Heart right ventricle (tissue), 16 donors: ENCODE measurements at regions of chr19 and their contacts with region 1.

Region 1: GRCh38 chr19:14405758-14406644 is 13.1 kb downstream of the DDX39A start:
- DNase-seq: peak; percentile 82 to 89
- ATAC-seq: peak; percentile 86 to 93 (median 90)
- H3K4me3 ChIP-seq: peak overlapping the region in 7 of 10 donors; percentile 13 to 40 (median 37)
- H3K27ac ChIP-seq: peak overlapping the region in 9 of 10 donors; percentile 13 to 82 (median 62)
- H3K4me1 ChIP-seq: peaks cover 0 to 19% (median 10%) of the 10 kb centered on the region in 9 donors
- H3K27me3 ChIP-seq: no peaks in the 10 kb centered on the region
- CTCF ChIP-seq: peak; percentile 88 to 97 (median 94)

Region 2: DNA sequence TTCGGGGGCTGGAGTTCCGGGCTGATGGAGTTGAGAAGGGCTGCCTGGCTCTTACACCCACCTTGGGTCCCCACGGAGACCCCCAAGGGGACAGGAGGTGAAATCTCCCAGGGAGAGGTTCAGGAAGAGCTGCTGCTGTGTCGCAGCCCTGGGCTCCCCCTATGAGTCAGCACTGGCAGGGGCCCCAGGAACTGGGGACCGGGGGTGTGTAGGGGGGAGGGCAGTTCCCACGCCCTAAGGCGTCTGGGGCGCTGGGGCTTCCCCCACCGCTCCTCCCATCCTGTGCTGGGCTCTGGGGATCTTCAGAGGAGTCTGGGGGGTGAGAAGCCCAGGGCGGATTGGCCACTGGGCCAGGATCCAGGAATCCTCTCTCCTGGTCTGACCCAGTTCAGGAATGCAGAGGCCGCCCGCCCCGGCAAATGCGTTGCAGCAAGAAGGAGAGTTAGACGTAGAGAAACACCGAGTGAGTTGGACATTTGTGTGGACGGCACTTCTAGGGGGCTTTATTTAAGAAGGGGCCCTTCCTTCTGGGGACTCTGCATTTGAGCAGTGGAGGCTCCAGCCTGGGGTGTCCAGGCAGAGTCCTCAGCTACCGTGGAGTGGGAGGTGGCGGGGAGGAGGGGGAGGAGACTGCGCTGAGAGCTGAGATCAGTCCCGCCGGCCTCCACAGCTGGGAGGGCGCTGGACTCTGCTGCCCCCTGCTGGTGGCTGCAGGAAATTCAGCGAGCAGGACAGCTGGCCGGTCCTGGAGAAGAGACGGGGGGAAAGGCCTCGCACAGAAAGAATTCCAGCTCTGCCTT is 544.1 kb before region 1 on chr19:
- intact Hi-C with region 1: no loop called
- DNase-seq: peak; percentile 95
- ATAC-seq: peak; percentile 91 to 96 (median 94)
- H3K4me3 ChIP-seq: peak overlapping the region in 9 of 10 donors; percentile 25 to 59 (median 51)
- H3K27ac ChIP-seq: peak overlapping the region; percentile 78 to 97 (median 96)
- H3K4me1 ChIP-seq: peaks cover 9 to 38% (median 27%) of the 10 kb centered on the region in 9 donors
- H3K27me3 ChIP-seq: peaks cover 0 to 29% (median 0%) of the 10 kb centered on the region in 7 donors
- CTCF ChIP-seq: peak; percentile 95 to 99 (median 98)

Region 3: DNA sequence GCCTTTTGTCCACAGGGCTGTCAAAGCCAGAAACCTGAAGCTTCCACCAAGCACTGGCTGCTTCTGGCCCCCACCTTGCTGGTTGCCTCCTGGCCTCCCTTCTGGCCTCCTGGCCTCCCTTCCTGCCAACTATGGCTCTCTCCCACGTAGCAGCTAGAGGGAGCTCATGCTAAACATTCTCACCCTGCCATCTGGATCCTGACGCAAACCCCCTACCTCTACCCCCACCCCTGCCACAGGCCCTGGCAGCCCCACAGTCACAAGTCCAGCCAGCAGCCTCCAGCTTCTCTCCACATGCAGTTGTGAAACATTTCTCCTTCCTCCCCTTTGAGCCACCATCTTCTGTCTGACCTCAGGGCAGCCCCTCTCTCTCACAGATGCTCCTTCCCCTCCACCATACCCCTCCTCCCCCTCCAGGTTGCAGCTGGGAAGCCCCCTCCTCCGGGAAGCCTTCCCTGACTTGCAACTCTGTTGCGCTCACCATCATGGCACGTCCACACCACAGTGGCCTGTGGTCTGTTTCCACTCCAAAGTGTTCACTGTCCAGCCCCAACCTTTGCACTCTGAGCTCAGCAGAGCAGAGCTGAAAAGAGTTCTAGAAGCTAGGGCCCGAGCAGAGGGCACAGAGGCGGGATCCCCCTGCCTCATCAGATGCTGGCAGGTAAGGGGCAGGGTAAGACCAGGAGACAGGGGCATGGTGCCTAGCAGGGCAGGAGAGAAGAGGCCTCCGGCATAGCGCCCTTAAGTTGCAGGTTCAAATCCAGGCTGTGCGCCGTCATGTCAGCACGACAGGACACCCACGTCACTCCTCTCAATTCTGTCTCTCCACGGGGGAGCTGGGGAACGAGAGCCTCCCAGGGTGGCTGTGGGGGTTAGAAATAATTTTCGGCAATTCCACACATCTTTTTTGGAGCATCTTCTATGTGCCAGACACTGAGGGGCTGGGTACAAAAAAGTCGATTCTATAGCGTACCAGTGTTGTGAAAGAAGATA is 207.3 kb before region 1 on chr19:
- intact Hi-C with region 1: loop called in 1 of 10 experiments (anchors 10 kb)
- DNase-seq: no peak
- ATAC-seq: no peak
- H3K4me3 ChIP-seq: no peak overlapping the region
- H3K27ac ChIP-seq: no peak overlapping the region
- H3K4me1 ChIP-seq: peaks cover 0 to 14% (median 0%) of the 10 kb centered on the region in 9 donors
- H3K27me3 ChIP-seq: no peaks in the 10 kb centered on the region
- CTCF ChIP-seq: no peak

Region 4: GRCh38 chr19:14354445-14354844 is 51.6 kb before region 1 on chr19:
- intact Hi-C with region 1: loop called in 1 of 10 experiments (anchors 10 kb)
- DNase-seq: no peak
- ATAC-seq: no peak
- H3K4me3 ChIP-seq: no peak overlapping the region
- H3K27ac ChIP-seq: no peak overlapping the region
- H3K4me1 ChIP-seq: peaks cover 0 to 37% (median 0%) of the 10 kb centered on the region in 9 donors
- H3K27me3 ChIP-seq: peaks cover 0 to 3% (median 0%) of the 10 kb centered on the region in 7 donors
- CTCF ChIP-seq: no peak

Region 5: DNA sequence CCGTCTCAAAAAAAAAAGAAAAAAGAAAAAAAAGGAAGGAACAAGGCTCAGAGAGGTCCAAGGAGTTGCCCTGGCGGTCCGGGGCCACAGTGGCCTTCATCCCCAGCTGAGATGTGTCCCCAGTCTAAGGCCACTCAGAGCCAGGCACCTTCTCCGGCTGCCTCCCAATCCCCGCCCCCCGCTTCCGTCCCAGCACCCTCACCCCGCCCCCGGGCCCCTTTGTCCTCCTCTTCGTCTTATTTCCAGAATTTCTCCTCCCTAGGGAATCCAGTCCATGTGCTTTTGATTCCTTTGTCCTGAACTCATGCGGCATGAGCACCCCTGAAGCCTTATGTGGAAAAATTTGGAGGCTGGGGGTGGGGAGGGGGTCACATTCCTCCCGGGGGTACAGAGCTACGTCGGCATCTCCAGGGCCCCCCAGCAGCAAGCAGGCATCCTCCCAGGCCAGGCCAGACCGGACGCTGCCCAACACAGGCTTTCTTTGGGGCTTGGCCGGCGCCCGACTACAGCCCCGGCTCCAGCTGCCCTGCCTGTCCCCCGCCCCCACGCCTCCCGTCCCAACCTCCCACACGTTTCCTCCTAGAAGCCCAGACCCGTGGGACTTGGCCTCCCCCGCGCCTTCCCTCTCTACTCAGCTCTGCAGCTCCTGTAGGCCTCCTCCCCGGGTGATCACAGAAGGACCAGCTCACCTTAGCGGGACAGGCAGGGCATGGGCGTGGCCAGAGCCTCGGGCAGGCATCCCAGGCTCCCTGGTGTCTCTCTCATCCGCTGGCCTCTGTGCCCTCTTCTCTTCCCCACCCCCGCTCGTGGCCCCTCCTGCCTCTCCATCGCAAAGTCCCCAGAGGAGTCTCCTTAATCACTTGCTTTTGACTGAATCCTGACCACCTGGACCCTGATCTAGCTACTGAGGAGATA is 42.6 kb before region 1 on chr19:
- intact Hi-C with region 1: loop called in 6 of 10 experiments (anchors 2 to 10 kb)
- DNase-seq: peak; percentile 87 to 91
- ATAC-seq: peak; percentile 82 to 95 (median 90)
- H3K4me3 ChIP-seq: peak overlapping the region in 8 of 10 donors; percentile 14 to 50 (median 37)
- H3K27ac ChIP-seq: peak overlapping the region in 9 of 10 donors; percentile 64 to 87 (median 78)
- H3K4me1 ChIP-seq: peaks cover 0 to 68% (median 29%) of the 10 kb centered on the region in 9 donors
- H3K27me3 ChIP-seq: no peaks in the 10 kb centered on the region
- CTCF ChIP-seq: no peak

Region 6: DNA sequence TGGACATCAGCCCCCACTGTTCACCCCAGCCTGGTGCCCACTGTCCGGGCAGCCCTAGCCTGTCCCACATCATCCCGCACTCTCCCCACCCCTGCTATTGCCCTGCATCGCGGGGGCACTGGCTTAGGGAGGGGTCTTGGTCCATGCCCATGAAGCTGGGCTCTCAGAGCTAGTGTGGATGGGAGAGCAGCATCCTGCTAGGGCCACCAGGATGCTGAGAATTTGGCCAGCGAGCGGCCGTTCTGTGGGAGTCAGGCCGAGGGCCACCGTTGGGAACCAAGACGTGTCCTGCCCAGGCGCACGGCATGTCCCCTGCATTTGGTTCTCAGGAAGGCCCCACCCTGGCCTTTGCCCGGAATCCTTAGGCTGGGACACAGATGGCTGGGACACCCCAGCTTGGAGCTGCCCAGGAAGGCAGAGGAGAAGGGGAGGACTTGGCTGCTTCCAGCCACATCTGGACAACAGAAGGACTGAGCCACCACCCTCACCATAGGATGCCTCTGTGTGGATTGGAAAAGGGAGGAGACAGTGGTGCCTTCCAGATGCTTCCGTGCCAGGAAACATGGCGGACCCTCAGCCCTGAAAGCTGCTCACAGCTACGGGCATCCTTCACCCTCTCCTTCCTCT is 10.2 kb before region 1 on chr19:
- intact Hi-C with region 1: no loop called
- DNase-seq: no peak
- ATAC-seq: peak in 1 of 8 donors; percentile 16
- H3K4me3 ChIP-seq: no peak overlapping the region
- H3K27ac ChIP-seq: no peak overlapping the region
- H3K4me1 ChIP-seq: no peaks in the 10 kb centered on the region
- H3K27me3 ChIP-seq: no peaks in the 10 kb centered on the region
- CTCF ChIP-seq: no peak